ENCODE measurements at regions of chr15 and their contacts with region 1.

Region 1: DNA sequence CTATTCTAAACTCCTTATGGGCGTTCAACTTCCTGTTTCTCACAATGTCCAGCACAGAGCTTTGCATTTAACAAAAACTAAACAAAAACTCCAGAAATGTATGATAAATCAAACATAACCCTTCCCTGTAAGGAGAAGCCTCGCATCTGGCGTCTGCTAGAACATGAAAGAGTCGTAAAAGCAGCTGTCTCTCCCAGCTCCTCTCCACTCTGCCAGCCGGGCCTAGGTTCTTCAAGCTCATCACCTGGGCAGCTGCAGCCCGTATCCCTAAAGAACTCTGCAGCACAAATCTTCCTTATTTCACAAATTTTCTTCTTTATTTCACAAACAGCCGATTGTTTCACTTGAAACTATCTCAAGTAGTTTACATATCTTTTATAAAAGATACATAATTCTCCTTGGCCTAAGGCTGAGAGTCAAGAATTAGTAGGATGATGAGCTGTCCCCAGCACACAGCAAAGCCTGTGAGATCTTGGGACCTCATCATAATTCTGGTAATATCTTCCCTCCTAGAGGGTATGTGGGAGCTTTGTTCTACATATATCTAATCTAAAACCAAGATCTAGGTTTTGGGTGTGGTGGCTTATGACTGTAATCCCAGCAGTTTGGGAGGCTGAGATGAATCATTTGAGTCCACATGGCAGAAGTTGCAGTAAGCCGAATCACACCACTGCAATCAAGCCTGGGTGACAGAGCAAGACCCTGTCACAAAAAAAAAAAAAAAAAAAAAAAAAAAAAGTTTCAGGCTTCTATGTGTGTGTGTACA is 35.3 kb downstream of the ANXA2 start:
- DNase-seq: peak; percentile 49
- H3K4me3 Mint-ChIP-seq: peak overlapping the region; percentile 13
- H3K27ac Mint-ChIP-seq: peak overlapping the region; percentile 82
- H3K4me1 Mint-ChIP-seq: peaks cover 36% of the 10 kb centered on the region
- H3K27me3 Mint-ChIP-seq: no peaks in the 10 kb centered on the region

Region 2: GRCh38 chr15:60397772-60398445 is 35.4 kb after region 1 on chr15 and contains the start of gene ANXA2:
- intact Hi-C with region 1: loop called (anchors 1 kb)
- DNase-seq: peak; percentile 80
- H3K4me3 Mint-ChIP-seq: peak within 1 kb of the TSS; percentile 97
- H3K27ac Mint-ChIP-seq: peak within 1 kb of the TSS; percentile 97
- H3K4me1 Mint-ChIP-seq: peaks cover 56% of the 10 kb centered on the region
- H3K27me3 Mint-ChIP-seq: no peaks in the 10 kb centered on the region
- total RNA-seq, gene ANXA2: 243 and 247 TPM in 2 replicates

Region 3: GRCh38 chr15:60478566-60479360 is 116.3 kb after region 1 on chr15 and contains the start of gene ICE2:
- intact Hi-C with region 1: loop called (anchors 1 kb)
- DNase-seq: peak; percentile 95
- H3K4me3 Mint-ChIP-seq: peak within 1 kb of the TSS; percentile 97
- H3K27ac Mint-ChIP-seq: peak within 1 kb of the TSS; percentile 97
- H3K4me1 Mint-ChIP-seq: peaks cover 52% of the 10 kb centered on the region
- H3K27me3 Mint-ChIP-seq: no peaks in the 10 kb centered on the region
- total RNA-seq, gene ICE2: 51.9 and 56.1 TPM in 2 replicates

Region 4: GRCh38 chr15:60520825-60521368 is 158.4 kb after region 1 on chr15:
- intact Hi-C with region 1: loop called (anchors 1 kb)
- DNase-seq: peak; percentile 63
- H3K4me3 Mint-ChIP-seq: no peak overlapping the region
- H3K27ac Mint-ChIP-seq: peak overlapping the region; percentile 71
- H3K4me1 Mint-ChIP-seq: peaks cover 58% of the 10 kb centered on the region
- H3K27me3 Mint-ChIP-seq: no peaks in the 10 kb centered on the region

Region 5: DNA sequence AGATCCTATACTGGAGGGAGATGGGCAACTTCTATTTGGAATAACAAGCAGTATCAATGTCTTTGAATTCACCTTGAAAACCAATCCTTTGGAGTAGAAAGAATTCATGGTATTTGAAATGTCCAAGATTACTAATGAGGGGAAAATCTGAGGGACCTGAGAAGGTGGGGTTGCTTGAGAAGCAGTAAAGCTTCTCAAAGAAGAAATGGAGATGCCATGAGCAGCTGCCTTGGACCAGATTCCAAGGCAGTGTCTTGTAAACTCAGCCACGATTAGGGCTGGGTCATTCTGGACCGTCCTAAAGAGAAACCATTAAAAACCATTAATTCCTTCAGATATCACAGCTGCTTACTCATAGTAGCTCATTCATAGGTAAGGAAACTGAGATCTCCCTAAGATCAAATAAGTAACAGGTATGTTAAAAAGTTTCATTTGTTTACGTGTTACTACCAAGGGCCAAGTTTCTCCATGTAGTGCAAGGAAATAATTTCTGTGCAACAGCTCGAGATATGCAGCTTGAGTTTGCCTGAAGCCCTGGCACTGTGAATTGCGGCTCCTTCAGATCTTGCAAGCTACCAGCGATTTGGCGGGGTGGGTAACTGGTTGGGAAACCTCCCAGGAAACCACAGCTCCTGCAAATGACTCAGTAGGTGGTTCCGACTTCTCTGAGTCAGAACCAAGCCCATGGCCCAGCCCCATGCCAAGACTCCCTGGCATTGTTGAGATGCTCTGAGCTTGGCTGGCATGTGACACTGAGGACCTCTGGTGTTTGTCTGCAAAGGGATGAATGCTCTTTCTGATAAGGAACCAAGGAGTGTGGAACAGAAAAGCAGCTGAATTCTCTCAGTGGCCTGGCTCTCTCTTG is 569.8 kb after region 1 on chr15:
- intact Hi-C with region 1: loop called (anchors 5 kb)
- DNase-seq: peak; percentile 34
- H3K4me3 Mint-ChIP-seq: no peak overlapping the region
- H3K27ac Mint-ChIP-seq: no peak overlapping the region
- H3K4me1 Mint-ChIP-seq: peaks cover 19% of the 10 kb centered on the region
- H3K27me3 Mint-ChIP-seq: peaks cover 12% of the 10 kb centered on the region

Measured in activated T-helper 1 cell treated with anti-CD3 and anti-CD28 coated beads, Interleukin-12 subunit alpha, Interleukin-12 subunit beta, Interleukin-2, Interleukin-4 antibody, amounts not matched to agents 30 ng/mL and 10 ng/mL and 1 ng/mL, durations not matched to agents 14 hours and 24 hours and 36 hours (primary cell).